ENCODE measurements at regions of chr4 and their contacts with region 1.

Region 1: DNA sequence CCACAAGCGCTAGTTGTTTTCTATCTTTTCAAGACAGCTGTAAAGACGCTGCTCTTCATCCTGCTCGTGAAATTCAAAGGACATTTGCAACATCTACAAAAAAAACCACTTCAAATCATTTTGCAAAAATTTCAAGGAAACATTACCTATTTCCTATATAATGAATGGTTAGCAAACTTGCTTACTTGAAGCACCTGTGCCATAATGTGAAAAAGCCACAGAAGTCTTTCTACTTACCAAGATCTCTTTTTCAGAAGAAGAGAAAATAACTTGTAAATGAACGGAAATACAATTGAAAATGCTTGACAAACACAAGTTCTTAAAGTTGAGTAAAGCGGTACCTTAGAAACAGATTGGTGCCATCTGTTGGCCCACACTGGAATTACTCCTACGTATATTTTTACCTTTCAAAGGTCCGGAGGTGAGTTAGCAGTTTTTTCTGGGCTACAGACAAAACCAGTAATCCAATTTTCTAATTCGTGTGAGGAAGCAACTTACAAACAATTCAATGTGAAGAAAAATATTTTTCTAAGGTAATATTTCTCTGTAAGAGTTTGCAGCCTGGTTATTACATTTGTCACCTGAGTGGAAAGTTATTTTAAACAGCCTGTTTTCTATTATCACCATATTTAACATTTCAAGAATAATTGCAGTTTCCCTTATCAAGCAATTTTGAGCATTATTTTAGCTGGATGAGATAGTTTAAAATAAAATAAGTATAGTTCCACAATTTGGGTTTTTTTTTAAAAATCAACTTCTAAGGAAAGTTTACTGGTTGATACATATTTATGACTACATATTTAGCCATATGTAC is at the start of gene TLR6:
- DNase-seq: peak; percentile 82
- H3K4me3 Mint-ChIP-seq: peak within 1 kb of the TSS; percentile 71
- H3K27ac Mint-ChIP-seq: peak within 1 kb of the TSS; percentile 98
- H3K4me1 Mint-ChIP-seq: peaks cover 57% of the 10 kb centered on the region
- H3K27me3 Mint-ChIP-seq: peaks cover 8% of the 10 kb centered on the region

Region 2: DNA sequence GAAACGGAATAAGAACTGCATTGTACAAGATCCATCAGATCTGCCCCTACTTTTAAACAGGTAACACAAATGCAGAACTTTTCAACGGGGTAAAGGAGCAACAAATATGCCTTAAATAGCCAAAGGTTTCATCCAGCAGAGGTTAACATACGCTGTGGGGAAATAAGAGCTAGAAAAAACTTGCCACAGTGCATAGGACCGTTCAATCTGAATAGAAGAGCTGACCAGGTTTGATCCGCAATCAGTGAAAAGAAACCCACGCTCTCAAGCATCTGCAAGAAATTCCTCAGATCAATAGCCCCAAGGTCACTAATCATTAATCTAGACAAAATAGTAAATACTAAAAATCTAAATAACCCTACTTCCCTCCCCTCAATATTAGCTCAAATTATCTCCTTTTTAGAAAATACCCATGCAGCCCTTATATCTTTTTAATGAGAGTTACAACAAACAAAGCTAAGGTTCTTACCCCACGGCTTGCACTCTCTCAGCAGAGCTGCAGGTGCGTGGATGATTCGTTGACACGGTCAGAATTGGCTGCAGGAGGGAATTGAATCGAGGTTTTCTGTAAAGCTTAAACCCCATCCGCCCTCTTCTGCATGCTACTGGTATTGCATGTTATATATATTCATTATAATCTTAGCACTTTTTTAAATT is 74.2 kb before region 1 on chr4 and contains the start of gene TLR10:
- CTCF ChIA-PET with region 1: interaction called, 13 read pairs
- DNase-seq: peak; percentile 49
- H3K4me3 Mint-ChIP-seq: no peak within 1 kb of the TSS
- H3K27ac Mint-ChIP-seq: no peak within 1 kb of the TSS
- H3K4me1 Mint-ChIP-seq: peaks cover 8% of the 10 kb centered on the region
- H3K27me3 Mint-ChIP-seq: no peaks in the 10 kb centered on the region

Region 3: GRCh38 chr4:38870098-38870808 is 13.5 kb after region 1 on chr4:
- CTCF ChIA-PET with region 1: interaction called, 12 read pairs
- DNase-seq: no peak
- H3K4me3 Mint-ChIP-seq: no peak overlapping the region
- H3K27ac Mint-ChIP-seq: no peak overlapping the region
- H3K4me1 Mint-ChIP-seq: peaks cover 33% of the 10 kb centered on the region
- H3K27me3 Mint-ChIP-seq: peaks cover 23% of the 10 kb centered on the region

Region 4: DNA sequence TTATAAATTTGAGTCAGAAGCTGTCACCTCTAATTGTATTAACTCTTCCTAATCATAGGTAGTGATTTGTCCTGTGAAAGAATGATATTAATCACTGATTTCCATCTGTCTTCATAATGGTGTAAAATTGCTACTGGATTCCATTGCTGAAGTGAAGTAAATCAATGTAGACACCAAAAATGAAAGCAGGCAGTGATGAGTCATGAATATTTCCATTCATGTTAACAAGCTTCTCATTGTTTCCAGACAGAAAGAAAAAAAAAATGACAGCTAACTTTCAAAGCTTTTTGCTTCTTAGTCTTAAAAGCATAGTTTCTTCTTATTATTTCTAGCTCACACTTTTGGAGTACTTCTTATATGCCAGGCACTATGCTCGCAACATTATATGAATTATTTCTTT is 32.4 kb after region 1 on chr4:
- CTCF ChIA-PET with region 1: interaction called, 27 read pairs
- DNase-seq: no peak
- H3K4me3 Mint-ChIP-seq: peak overlapping the region; percentile 20
- H3K27ac Mint-ChIP-seq: peak overlapping the region; percentile 67
- H3K4me1 Mint-ChIP-seq: peaks cover 19% of the 10 kb centered on the region
- H3K27me3 Mint-ChIP-seq: peaks cover 3% of the 10 kb centered on the region

Measured in activated naive CD4-positive, alpha-beta T cell treated with anti-CD3 and anti-CD28 coated beads, Interleukin-2, amount 10 ng/mL, durations not matched to agents 7 days and 5 days (primary cell).